IMR-90 (cell line): ENCODE measurements at regions of chr10 and their contacts with region 1.

Region 1: GRCh38 chr10:103859161-103860086 is 4.0 kb upstream of the SH3PXD2A start:
- DNase-seq: peak; percentile 74
- ATAC-seq: peak; percentile 76
- H3K4me3 ChIP-seq: no peak overlapping the region
- H3K27ac ChIP-seq: no peak overlapping the region
- H3K4me1 ChIP-seq: peaks cover 6% of the 10 kb centered on the region; the same call in 1 of the 2 replicates
- H3K27me3 ChIP-seq: no peaks in the 10 kb centered on the region
- CTCF ChIP-seq: peak; percentile 75
- POLR2A ChIP-seq: no peak
- RAD21 ChIP-seq: peak; percentile 77

Region 2: GRCh38 chr10:103592186-103593021 is 267.0 kb before region 1 on chr10:
- CTCF ChIA-PET with region 1: no interaction called
- POLR2A ChIA-PET with region 1: no interaction called
- dilution Hi-C with region 1: no loop called
- in situ Hi-C with region 1: loop called (anchors 10 kb)
- intact Hi-C with region 1: loop called (anchors 5 kb)
- DNase-seq: peak; percentile 38
- ATAC-seq: peak; percentile 79
- H3K4me3 ChIP-seq: no peak overlapping the region
- H3K27ac ChIP-seq: no peak overlapping the region
- H3K4me1 ChIP-seq: no peaks in the 10 kb centered on the region; the same call in 1 of the 2 replicates
- H3K27me3 ChIP-seq: no peaks in the 10 kb centered on the region; the same call in 1 of the 2 replicates
- CTCF ChIP-seq: peak; percentile 63
- POLR2A ChIP-seq: no peak
- RAD21 ChIP-seq: peak; percentile 61

Region 3: GRCh38 chr10:103598654-103599115 is 260.7 kb before region 1 on chr10:
- CTCF ChIA-PET with region 1: no interaction called
- POLR2A ChIA-PET with region 1: no interaction called
- dilution Hi-C with region 1: no loop called
- in situ Hi-C with region 1: loop called (anchors 10 kb)
- intact Hi-C with region 1: loop called (anchors 5 kb)
- DNase-seq: peak; percentile 82
- ATAC-seq: peak; percentile 83
- H3K4me3 ChIP-seq: no peak overlapping the region
- H3K27ac ChIP-seq: no peak overlapping the region
- H3K4me1 ChIP-seq: no peaks in the 10 kb centered on the region; the same call in 1 of the 2 replicates
- H3K27me3 ChIP-seq: no peaks in the 10 kb centered on the region
- CTCF ChIP-seq: peak; percentile 88
- POLR2A ChIP-seq: 0 out of 2 replicates have a peak, but pooled peaks have one; percentile 29
- RAD21 ChIP-seq: peak; percentile 88

Region 4: GRCh38 chr10:103772096-103772845 is 87.2 kb before region 1 on chr10:
- CTCF ChIA-PET with region 1: interaction called, 3 read pairs
- POLR2A ChIA-PET with region 1: no interaction called
- dilution Hi-C with region 1: no loop called
- in situ Hi-C with region 1: no loop called
- intact Hi-C with region 1: loop called (anchors 5 kb)
- DNase-seq: peak; percentile 98
- ATAC-seq: peak; percentile 98
- H3K4me3 ChIP-seq: 0 out of 2 replicates have a peak overlapping the region, but pooled peaks have one; percentile 4
- H3K27ac ChIP-seq: peak overlapping the region; percentile 26
- H3K4me1 ChIP-seq: peaks cover 8% of the 10 kb centered on the region; the same call in 1 of the 2 replicates
- H3K27me3 ChIP-seq: no peaks in the 10 kb centered on the region
- CTCF ChIP-seq: no peak
- POLR2A ChIP-seq: peak; percentile 20; the same call in 1 of the 2 replicates
- RAD21 ChIP-seq: peak; percentile 4; the same call in 1 of the 2 replicates